Heart left ventricle (tissue), 16 donors: ENCODE measurements at regions of chr13 and their contacts with region 1.

Region 1: DNA sequence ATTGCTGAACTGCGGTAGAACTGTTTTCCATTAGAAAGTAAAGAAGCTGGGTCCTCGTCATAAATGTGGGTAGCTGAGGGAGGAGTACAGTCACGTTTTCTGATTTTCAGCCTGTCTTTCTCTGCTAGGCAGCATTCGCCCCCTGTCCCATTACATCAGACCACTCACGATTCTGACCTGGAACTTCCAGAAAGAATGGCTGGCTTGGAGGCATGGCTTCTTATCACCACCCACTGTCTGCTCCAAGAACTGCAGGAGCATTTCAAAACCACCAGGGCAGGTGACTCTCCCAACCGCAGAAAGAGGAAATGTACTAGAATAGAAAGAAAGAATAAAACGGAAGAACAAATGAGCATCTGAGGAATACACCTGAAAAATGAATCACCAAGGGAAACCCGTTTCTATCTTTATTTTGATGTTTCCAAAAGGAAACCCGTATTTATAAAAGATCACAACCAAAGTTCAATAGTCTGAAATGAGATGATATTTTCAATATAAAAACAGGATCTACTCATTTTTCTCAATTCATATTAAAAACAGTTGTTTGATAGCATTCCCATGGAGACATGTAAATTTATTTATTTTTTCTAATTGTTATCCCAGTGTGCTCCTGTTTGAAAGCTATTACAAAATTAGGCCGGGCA is 22.1 kb upstream of the POMP start:
- DNase-seq: peak in 3 of 5 donors; percentile 39 to 63 (median 55)
- ATAC-seq: peak; percentile 67 to 85 (median 76)
- H3K4me3 ChIP-seq: no peak overlapping the region
- H3K27ac ChIP-seq: peak overlapping the region in 8 of 12 donors; percentile 13 to 67 (median 30)
- H3K4me1 ChIP-seq: peaks cover 0 to 39% (median 8%) of the 10 kb centered on the region in 12 donors
- H3K27me3 ChIP-seq: no peaks in the 10 kb centered on the region
- CTCF ChIP-seq: peak; percentile 77 to 93 (median 86)
- POLR2A ChIP-seq: no peak

Region 2: DNA sequence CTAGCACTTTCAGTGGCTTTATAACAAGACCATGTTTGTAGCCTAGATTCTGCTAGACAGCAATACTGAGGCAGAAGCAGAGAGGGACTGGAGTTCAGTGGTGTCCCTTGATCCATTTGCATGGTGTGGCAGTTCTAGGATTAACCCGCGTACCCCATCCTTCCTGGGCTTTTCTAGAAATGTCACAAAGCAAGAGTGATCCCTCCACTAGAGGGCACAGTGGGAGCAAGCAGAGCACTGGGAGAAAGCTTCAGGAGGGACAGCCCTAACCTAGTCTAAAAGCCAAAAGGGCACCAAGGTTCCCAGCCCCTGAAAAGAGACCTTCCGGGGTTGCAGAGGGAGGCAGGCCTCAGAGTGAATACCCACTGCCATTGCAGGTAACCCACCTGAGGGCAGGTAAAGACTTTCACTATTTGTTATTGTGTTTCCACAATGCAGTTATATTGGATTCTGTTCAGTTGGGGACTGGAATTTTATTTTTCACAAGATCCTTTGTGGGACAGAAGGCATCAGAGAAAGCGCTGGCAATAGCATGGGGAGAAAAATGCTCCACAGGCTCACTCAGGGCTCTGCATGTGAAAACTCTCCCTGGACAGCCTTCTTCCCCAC is 312.5 kb before region 1 on chr13:
- intact Hi-C with region 1: loop called (anchors 1 to 5 kb)
- DNase-seq: peak in 4 of 5 donors; percentile 50 to 70 (median 62)
- ATAC-seq: peak; percentile 72 to 88 (median 81)
- H3K4me3 ChIP-seq: peak overlapping the region in 1 of 12 donors; percentile 11
- H3K27ac ChIP-seq: peak overlapping the region in 11 of 12 donors; percentile 10 to 82 (median 63)
- H3K4me1 ChIP-seq: peaks cover 4 to 55% (median 25%) of the 10 kb centered on the region in 12 donors
- H3K27me3 ChIP-seq: no peaks in the 10 kb centered on the region
- CTCF ChIP-seq: peak; percentile 67 to 91 (median 79)
- POLR2A ChIP-seq: no peak

Region 3: DNA sequence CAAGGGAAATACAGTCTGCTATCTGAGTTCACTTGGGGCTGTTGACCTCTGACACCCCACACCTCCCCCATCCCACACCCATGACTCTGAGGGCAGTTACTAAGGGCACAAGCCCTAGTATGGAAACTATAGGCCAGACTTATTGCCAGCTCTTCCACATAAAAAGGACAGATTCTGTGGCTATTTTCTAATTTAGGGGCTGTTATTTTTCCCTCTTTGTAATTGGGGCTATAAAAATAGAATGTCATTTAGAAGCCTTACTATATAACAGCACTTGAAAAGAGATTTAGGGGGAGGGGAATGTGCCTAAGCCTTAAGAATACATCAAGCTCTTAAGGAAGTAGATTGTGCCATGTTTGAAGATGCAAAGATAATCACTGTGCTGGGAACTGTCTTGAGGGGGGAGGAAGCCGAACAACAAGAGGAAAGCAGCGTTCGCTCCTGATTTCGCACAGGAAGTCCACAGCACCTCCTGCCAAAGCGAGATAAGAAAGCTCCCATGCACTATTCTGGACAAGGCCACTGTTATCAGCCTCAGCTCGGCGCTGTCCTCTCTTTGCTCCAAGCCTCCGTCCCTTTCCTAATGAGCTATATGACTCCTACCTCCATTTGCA is 228.5 kb before region 1 on chr13:
- intact Hi-C with region 1: loop called in 3 of 10 experiments (anchors 5 kb)
- DNase-seq: peak; percentile 72 to 84 (median 79)
- ATAC-seq: peak; percentile 84 to 96 (median 90)
- H3K4me3 ChIP-seq: no peak overlapping the region
- H3K27ac ChIP-seq: peak overlapping the region; percentile 19 to 84 (median 62)
- H3K4me1 ChIP-seq: peaks cover 0 to 67% (median 32%) of the 10 kb centered on the region in 12 donors
- H3K27me3 ChIP-seq: no peaks in the 10 kb centered on the region
- CTCF ChIP-seq: peak in 3 of 12 donors; percentile 14 to 24 (median 23)
- POLR2A ChIP-seq: no peak

Region 4: DNA sequence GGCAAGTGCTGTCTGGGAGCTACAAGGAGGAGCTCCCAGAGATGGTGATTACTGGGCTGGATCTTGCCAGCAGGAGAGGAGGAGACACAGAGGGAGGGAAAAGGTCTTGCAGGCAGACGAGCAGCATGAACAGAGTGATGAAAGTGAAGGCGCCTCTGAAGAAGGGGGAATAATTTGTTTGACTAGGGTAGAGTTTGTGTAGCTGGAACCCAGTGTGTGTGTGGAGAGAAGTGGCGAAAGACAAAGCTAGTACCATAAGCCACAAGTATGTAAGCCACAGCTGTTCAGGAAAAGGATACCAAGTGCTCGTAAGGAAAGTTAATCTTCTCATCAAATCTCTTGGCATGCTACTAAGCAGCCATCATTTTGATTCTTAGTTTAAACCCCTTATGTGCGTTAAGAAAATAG is 147.3 kb before region 1 on chr13:
- intact Hi-C with region 1: loop called in 4 of 10 experiments (anchors 5 to 10 kb)
- DNase-seq: no peak
- ATAC-seq: no peak
- H3K4me3 ChIP-seq: peak overlapping the region in 9 of 12 donors; percentile 15 to 86 (median 73)
- H3K27ac ChIP-seq: peak overlapping the region in 8 of 12 donors; percentile 2 to 45 (median 21)
- H3K4me1 ChIP-seq: peaks cover 0 to 59% (median 24%) of the 10 kb centered on the region in 12 donors
- H3K27me3 ChIP-seq: peaks cover 0 to 59% (median 38%) of the 10 kb centered on the region in 9 donors
- CTCF ChIP-seq: no peak
- POLR2A ChIP-seq: no peak

Region 5: GRCh38 chr13:28494776-28495537 is 141.8 kb before region 1 on chr13 and contains the start of gene FLT1:
- intact Hi-C with region 1: loop called in 5 of 10 experiments (anchors 5 to 10 kb)
- DNase-seq: peak; percentile 78 to 89 (median 87)
- ATAC-seq: peak; percentile 82 to 87 (median 85)
- H3K4me3 ChIP-seq: peak within 1 kb of the TSS; percentile 63 to 90 (median 78)
- H3K27ac ChIP-seq: peak within 1 kb of the TSS; percentile 76 to 96 (median 92)
- H3K4me1 ChIP-seq: peaks cover 0 to 34% (median 17%) of the 10 kb centered on the region in 12 donors
- H3K27me3 ChIP-seq: peaks cover 0 to 64% (median 48%) of the 10 kb centered on the region in 9 donors
- CTCF ChIP-seq: no peak
- POLR2A ChIP-seq: peak in 1 of 2 donors; percentile 93
- total RNA-seq, gene FLT1: 25.7 to 73.2 (median 43.9) TPM

Region 6: GRCh38 chr13:28531077-28531844 is 105.5 kb before region 1 on chr13:
- intact Hi-C with region 1: loop called in 6 of 10 experiments (anchors 2 to 10 kb)
- DNase-seq: peak; percentile 72 to 82 (median 76)
- ATAC-seq: peak; percentile 40 to 83 (median 68)
- H3K4me3 ChIP-seq: peak overlapping the region; percentile 1 to 67 (median 58)
- H3K27ac ChIP-seq: peak overlapping the region; percentile 55 to 90 (median 86)
- H3K4me1 ChIP-seq: peaks cover 0 to 32% (median 13%) of the 10 kb centered on the region in 12 donors
- H3K27me3 ChIP-seq: peaks cover 0 to 35% (median 15%) of the 10 kb centered on the region in 9 donors
- CTCF ChIP-seq: no peak
- POLR2A ChIP-seq: no peak

Region 7: DNA sequence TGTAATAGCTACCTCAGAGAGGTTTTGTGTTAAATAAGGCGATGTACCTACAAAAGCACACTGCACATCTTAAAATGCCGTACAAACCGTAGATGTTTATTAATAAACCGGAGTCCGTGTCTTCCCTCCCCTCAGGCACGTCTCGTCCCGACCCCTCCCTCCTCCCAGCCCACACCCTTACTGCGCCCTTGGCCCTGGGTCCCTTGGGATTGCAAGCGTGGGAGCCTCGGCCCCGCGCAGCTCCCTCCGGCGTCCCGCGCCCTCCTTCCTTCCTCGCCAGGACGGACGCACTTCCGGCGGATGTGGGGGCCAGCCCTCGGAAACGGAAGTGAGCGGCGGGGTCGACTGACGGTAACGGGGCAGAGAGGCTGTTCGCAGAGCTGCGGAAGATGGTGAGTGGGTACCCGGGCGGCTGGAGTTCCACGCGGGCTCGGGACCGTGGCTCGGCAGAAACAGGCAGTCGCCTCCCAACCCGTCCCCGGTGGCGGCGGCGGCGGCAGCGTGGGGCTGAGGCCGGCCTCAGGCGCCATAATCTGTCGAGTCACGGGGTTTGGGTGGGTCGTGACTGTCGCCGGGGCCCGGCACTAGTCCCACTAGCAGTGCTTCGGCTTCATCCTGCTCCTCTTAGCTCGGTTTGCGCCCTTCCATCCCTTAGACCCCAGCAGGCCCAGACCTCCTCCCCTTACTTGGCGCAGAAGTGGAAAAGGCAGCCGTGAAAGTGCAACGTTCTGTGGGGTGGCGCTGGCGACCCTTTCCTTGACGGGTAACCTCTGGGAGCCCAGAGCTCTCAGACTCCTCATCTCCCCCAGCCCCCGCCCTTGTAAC is 22.2 kb after region 1 on chr13 and contains the start of gene POMP:
- intact Hi-C with region 1: loop called in 2 of 10 experiments (anchors 2 kb)
- DNase-seq: peak; percentile 96 to 97 (median 96)
- ATAC-seq: peak; percentile 97 to 98 (median 98)
- H3K4me3 ChIP-seq: peak within 1 kb of the TSS; percentile 63 to 99 (median 88)
- H3K27ac ChIP-seq: peak within 1 kb of the TSS; percentile 88 to 99 (median 96)
- H3K4me1 ChIP-seq: peaks cover 10 to 71% (median 44%) of the 10 kb centered on the region in 12 donors
- H3K27me3 ChIP-seq: no peaks in the 10 kb centered on the region
- CTCF ChIP-seq: peak in 2 of 12 donors; percentile 3 to 9
- POLR2A ChIP-seq: peak; percentile 43 to 89
- total RNA-seq, gene POMP: 87.8 to 120 (median 102) TPM